Activated naive CD4-positive, alpha-beta T cell treated with anti-CD3 and anti-CD28 coated beads for 36 hours (primary cell): ENCODE measurements at regions of chr6 and their contacts with region 1.

Region 1: DNA sequence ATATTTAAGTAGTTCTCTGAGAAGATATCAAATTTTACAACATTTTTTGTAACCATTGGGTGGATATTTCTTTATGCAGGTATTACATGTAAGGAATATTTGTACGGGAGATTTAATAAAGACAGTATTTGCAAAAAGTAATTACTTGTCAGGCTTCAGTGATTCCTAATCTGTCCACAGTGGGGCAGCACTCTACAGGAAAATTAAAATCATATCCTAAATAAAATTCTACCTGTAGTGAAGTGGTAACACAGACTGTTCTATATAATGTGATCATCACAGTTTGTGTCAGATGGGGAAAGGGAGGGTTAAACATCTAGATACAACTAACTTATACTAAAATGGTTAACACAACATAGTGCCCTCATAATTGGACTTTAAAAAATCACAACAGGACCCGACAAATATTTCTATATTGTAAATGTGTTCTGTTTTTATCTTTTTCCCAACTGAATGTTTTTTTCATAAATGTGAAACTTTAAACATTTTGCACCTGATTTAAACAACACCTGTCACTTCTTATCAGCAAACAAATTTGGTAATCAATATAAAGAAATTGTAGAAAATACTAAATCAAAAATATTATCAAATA is 145.6 kb upstream of the MANEA start:
- DNase-seq: peak; percentile 62
- H3K4me3 Mint-ChIP-seq: no peak overlapping the region
- H3K27ac Mint-ChIP-seq: no peak overlapping the region
- H3K4me1 Mint-ChIP-seq: no peaks in the 10 kb centered on the region
- H3K27me3 Mint-ChIP-seq: peaks cover 2% of the 10 kb centered on the region

Region 2: DNA sequence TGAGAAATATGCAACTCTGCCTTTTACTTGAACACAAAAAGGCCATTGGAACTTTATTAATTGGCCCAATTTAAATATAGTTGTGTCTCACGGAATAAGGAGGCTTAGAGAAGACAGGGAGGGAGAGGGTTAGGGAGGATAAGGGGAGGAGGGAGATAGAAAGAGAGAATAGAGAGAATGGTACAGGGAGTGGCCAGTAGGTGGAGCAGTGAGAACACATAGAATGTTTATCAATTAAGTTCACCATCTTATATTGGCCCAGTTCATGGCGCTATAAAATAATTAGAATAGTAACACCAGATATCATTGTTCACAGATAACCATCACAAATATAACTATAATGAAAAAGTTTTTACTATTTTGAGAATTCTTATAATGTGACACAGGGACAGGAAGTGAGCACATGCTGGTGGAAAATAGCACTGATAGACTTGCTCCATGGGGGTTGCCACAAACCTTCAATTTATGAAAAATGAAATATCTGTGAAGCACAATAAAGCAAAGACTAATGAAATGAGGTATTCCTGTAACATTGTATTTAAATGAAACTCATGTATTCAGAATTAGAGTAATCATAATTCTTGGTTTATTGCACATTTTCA is 228.5 kb before region 1 on chr6:
- CTCF ChIA-PET with region 1: no interaction called
- intact Hi-C with region 1: loop called (anchors 5 kb)
- DNase-seq: peak; percentile 51
- H3K4me3 Mint-ChIP-seq: no peak overlapping the region
- H3K27ac Mint-ChIP-seq: no peak overlapping the region
- H3K4me1 Mint-ChIP-seq: no peaks in the 10 kb centered on the region
- H3K27me3 Mint-ChIP-seq: no peaks in the 10 kb centered on the region

Region 3: GRCh38 chr6:95685822-95686221 is 254.1 kb after region 1 on chr6:
- CTCF ChIA-PET with region 1: no interaction called
- intact Hi-C with region 1: loop called (anchors 10 kb)
- DNase-seq: no peak
- H3K4me3 Mint-ChIP-seq: no peak overlapping the region
- H3K27ac Mint-ChIP-seq: no peak overlapping the region
- H3K4me1 Mint-ChIP-seq: no peaks in the 10 kb centered on the region
- H3K27me3 Mint-ChIP-seq: no peaks in the 10 kb centered on the region

Region 4: DNA sequence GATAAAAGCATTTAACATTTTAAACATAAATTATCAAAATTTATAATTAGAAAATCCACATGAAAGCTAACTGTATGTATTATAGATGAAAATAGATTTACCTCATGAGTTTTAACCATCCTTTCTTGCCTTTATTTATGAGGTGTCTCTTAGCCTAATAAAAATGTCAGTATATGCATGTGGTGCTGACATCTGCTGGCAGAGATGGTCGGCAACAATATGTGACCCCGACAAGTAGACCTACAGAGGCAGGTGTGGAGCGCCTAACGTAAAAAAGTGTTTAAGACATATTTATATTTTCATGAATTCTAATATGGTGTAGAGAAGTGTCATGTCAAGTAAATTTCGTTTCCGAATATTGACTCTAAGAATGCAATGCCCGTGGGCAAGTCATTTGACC is 435.0 kb after region 1 on chr6:
- CTCF ChIA-PET with region 1: no interaction called
- intact Hi-C with region 1: loop called (anchors 1 kb)
- DNase-seq: peak; percentile 8
- H3K4me3 Mint-ChIP-seq: no peak overlapping the region
- H3K27ac Mint-ChIP-seq: no peak overlapping the region
- H3K4me1 Mint-ChIP-seq: no peaks in the 10 kb centered on the region
- H3K27me3 Mint-ChIP-seq: no peaks in the 10 kb centered on the region

Region 5: GRCh38 chr6:96468681-96469224 is 1037.0 kb after region 1 on chr6:
- CTCF ChIA-PET with region 1: no interaction called
- intact Hi-C with region 1: loop called (anchors 1 kb)
- DNase-seq: no peak
- H3K4me3 Mint-ChIP-seq: no peak overlapping the region
- H3K27ac Mint-ChIP-seq: no peak overlapping the region
- H3K4me1 Mint-ChIP-seq: peaks cover 10% of the 10 kb centered on the region
- H3K27me3 Mint-ChIP-seq: peaks cover 4% of the 10 kb centered on the region